Activated naive CD4-positive, alpha-beta T cell treated with anti-CD3 and anti-CD28 coated beads for 36 hours (primary cell): ENCODE measurements at regions of chr3 and their contacts with region 1.

Region 1: DNA sequence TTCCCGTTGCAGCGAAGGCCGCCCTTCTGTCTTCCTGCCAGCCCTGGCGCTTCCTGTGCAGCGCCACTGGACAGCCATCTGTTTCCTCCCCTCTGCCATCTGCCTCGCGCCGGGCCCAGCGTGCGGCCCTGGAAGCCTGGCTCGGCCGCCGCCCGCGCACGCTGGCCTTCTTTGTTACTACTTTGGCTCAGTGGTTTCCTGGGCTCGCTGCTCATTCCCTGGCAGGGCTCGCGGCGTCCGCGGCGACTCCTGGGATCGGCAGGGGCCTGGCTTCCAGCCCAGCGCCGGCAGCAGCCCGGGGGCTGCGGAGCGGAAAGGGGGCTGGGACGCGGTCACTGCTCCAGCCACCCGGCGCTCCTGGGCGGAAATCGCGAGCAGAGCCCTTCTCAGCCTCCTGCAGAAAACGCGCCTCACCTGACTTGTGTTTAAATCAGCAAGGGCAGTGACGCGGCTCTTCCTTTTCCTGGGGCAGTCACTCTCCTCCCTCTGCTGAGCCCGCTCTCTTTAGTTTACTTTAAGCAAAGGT is 10.0 kb downstream of the CMTM7 start:
- DNase-seq: peak; percentile 77
- H3K4me3 Mint-ChIP-seq: peak overlapping the region; percentile 92
- H3K27ac Mint-ChIP-seq: peak overlapping the region; percentile 99
- H3K4me1 Mint-ChIP-seq: peaks cover 74% of the 10 kb centered on the region
- H3K27me3 Mint-ChIP-seq: no peaks in the 10 kb centered on the region

Region 2: DNA sequence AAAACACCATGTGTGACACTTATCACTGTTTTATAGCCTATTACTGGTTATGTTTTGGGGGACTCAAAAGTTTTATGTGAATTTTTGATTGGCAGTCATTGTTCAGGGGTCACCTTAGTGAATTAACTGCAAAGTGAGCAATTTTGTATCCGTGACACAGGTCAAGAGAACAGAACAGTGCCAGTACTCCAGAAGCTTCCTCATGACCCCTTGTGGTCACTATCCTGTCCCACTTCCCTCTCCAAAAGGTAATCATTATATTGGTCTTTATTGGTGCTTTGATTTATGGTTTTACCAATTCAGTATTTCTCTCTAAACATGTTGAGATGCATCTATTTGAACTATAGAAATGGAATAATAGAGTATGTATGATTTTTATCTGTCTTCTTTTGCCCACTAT is 761.8 kb before region 1 on chr3:
- CTCF ChIA-PET with region 1: no interaction called
- intact Hi-C with region 1: no loop called
- DNase-seq: no peak
- H3K4me3 Mint-ChIP-seq: no peak overlapping the region
- H3K27ac Mint-ChIP-seq: no peak overlapping the region
- H3K4me1 Mint-ChIP-seq: peaks cover 28% of the 10 kb centered on the region
- H3K27me3 Mint-ChIP-seq: no peaks in the 10 kb centered on the region

Region 3: GRCh38 chr3:32303977-32304881 is 97.4 kb before region 1 on chr3:
- CTCF ChIA-PET with region 1: no interaction called
- intact Hi-C with region 1: no loop called
- DNase-seq: no peak
- H3K4me3 Mint-ChIP-seq: no peak overlapping the region
- H3K27ac Mint-ChIP-seq: peak overlapping the region; percentile 46
- H3K4me1 Mint-ChIP-seq: peaks cover 53% of the 10 kb centered on the region
- H3K27me3 Mint-ChIP-seq: no peaks in the 10 kb centered on the region

Region 4: GRCh38 chr3:32334675-32335074 is 66.9 kb before region 1 on chr3:
- CTCF ChIA-PET with region 1: no interaction called
- intact Hi-C with region 1: loop called (anchors 2 kb)
- DNase-seq: peak; percentile 83
- H3K4me3 Mint-ChIP-seq: no peak overlapping the region
- H3K27ac Mint-ChIP-seq: peak overlapping the region; percentile 19
- H3K4me1 Mint-ChIP-seq: peaks cover 44% of the 10 kb centered on the region
- H3K27me3 Mint-ChIP-seq: no peaks in the 10 kb centered on the region

Region 5: GRCh38 chr3:32414520-32415202 is 13.0 kb after region 1 on chr3:
- CTCF ChIA-PET with region 1: interaction called, 9 read pairs
- intact Hi-C with region 1: loop called (anchors 1 kb)
- DNase-seq: peak; percentile 78
- H3K4me3 Mint-ChIP-seq: peak overlapping the region; percentile 40
- H3K27ac Mint-ChIP-seq: peak overlapping the region; percentile 94
- H3K4me1 Mint-ChIP-seq: peaks cover 81% of the 10 kb centered on the region
- H3K27me3 Mint-ChIP-seq: no peaks in the 10 kb centered on the region

Region 6: DNA sequence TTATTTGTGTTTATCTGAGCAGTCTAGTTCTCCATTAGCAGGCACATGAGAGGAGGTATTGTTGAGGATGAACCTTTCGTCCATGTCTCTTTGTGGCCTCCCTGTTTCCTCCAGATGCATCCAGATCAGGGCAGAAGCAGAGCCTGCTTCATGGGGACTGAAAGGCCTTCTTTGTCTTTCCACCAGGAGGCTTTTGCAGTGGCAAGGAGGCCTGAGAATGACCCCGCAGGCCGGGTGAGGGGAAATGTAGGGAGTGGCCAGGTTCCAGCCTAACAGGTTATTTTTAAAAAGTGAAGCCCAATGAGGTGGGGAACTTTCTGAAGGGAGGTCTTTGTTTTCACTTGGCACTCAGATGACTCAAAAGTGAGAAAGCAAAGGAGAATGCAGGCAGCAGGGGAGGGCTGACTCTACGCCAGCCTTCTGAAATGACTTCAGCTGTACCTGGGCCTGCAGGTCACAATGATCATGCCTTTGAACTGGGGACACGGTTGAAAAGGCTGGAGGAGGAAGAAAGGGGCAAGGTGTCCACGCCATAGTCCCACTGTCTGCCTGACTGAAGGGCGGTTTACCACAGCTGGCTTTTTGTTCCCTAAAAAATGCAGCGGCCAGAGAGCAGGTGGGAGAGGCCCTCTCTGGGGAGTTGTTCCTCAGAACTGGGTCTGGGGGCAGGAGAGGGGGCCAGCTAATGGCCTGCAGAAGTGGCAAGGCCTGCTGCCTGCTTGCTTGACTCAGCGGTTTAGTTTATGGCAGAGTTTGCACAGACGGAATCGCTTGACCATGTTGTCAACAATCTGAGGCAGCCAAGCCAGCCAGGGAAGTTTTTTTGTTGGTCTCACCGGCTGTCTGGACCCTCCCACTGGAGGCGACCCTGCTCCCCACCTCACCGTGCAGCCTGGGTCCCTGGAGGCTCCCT is 18.8 kb after region 1 on chr3:
- CTCF ChIA-PET with region 1: interaction called, 9 read pairs
- intact Hi-C with region 1: loop called (anchors 1 kb)
- DNase-seq: peak; percentile 81
- H3K4me3 Mint-ChIP-seq: peak overlapping the region; percentile 66
- H3K27ac Mint-ChIP-seq: peak overlapping the region; percentile 94
- H3K4me1 Mint-ChIP-seq: peaks cover 92% of the 10 kb centered on the region
- H3K27me3 Mint-ChIP-seq: no peaks in the 10 kb centered on the region

Region 7: DNA sequence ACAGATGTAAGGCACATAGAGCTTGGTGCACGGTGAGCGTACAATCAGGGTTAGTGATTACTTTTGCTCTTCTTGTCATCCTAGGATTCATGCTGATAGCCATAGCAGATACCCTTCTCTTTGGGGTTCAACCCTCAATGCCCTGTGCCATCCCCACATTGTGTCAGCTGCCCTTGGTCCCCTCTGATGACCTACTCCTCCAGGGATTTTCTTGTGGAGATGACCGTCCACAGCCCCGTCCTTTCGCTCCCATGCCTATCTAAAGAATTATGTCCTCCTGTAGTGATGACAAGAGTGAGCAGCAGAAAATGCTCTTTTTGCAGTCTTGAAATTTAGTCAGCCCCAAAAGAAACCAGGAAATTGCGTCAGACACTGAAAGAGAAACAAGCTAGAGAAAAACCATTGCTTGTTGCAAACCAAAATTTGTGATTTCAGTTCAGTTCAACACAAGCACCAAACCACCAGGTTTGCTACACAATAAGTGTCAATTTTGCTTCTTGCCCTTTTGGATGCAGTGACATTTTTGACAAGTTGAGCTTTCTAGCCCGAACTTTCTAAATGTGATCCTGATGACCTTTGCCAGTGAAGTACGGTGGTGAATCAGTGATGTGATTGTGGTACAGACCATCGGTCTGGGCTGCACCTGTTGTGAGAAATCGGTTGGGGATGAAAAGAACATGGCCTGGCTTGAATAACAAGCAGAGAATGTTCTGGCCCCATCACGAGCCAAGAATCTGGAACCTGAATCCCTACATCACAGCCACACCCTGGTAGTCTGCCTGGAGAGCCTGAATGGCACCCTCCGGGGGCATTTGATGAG is 31.3 kb after region 1 on chr3:
- CTCF ChIA-PET with region 1: interaction called, 6 read pairs
- intact Hi-C with region 1: loop called (anchors 1 kb)
- DNase-seq: peak; percentile 59
- H3K4me3 Mint-ChIP-seq: peak overlapping the region; percentile 76
- H3K27ac Mint-ChIP-seq: peak overlapping the region; percentile 99
- H3K4me1 Mint-ChIP-seq: peaks cover 84% of the 10 kb centered on the region
- H3K27me3 Mint-ChIP-seq: no peaks in the 10 kb centered on the region